ENCODE measurements at regions of chr12 and their contacts with region 1.

Region 1: DNA sequence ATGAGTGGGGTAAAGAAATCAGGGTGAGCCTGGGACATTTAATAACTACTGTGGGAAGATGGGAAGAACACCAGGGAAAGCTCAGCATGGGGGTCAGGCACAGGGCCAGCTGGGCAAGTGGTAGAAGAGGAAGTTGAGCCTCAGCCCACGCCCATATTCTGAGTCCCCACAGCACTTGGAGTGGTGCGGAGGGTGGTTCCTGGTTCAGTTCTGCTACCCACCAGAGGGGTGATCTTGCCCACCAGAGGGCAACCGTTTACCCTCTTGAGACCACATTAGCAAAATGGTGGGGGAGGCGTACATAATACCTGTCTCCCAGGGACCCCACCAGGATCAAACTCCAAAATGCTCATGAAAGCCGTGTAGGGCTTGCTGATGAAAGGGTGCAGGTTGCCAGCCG is 16.8 kb upstream of the ANKRD33 start:
- DNase-seq: no peak
- ATAC-seq: no peak
- H3K4me3 ChIP-seq: no peak overlapping the region
- H3K27ac ChIP-seq: no peak overlapping the region
- H3K4me1 ChIP-seq: peaks cover 2% of the 10 kb centered on the region; the same call in 1 of the 2 replicates
- H3K27me3 ChIP-seq: peaks cover 37% of the 10 kb centered on the region
- CTCF ChIP-seq: no peak
- POLR2A ChIP-seq: no peak
- RAD21 ChIP-seq: no peak

Region 2: DNA sequence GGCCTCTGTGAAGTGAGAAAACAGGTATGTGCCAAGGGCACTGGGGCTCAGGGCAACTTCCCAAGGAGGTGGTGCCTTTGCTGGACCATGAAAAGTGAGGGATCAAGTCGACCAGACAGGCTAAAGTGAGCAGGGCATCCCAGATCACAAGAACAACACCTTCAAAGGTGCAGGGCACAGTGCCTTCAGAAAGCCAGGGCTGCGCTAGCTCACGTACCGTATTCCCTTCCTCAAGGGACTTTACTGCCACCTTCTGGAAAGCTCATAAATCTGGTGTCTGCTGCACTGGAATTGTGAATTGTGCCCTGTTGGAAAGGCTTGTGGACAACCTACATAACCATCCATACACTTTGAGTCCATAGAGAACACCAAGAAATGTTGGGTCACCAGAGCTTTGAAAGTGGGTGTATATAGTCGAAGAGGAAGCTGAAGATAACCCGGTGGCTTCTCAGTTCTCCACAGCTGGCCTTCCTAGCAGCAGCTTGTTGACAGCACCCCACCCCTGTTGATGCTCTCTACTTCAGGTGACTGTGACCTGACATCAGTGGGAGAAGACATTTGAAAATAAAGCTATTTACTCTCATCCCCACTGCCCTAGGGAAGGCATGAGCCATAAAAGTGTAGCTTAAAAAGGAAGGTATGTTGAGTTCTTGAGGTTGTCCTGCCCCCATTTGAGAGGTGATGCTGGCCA is 47.1 kb before region 1 on chr12:
- CTCF ChIA-PET with region 1: interaction called, 12 read pairs
- POLR2A ChIA-PET with region 1: no interaction called
- dilution Hi-C with region 1: no loop called
- in situ Hi-C with region 1: no loop called
- intact Hi-C with region 1: no loop called
- DNase-seq: peak; percentile 73
- ATAC-seq: peak; percentile 33; the same call in 1 of the 2 replicates
- H3K4me3 ChIP-seq: no peak overlapping the region
- H3K27ac ChIP-seq: no peak overlapping the region
- H3K4me1 ChIP-seq: peaks cover 3% of the 10 kb centered on the region; the same call in 1 of the 2 replicates
- H3K27me3 ChIP-seq: no peaks in the 10 kb centered on the region; the same call in 1 of the 2 replicates
- CTCF ChIP-seq: peak; percentile 68
- POLR2A ChIP-seq: no peak
- RAD21 ChIP-seq: peak; percentile 83

Region 3: GRCh38 chr12:51886021-51886322 is 14.8 kb after region 1 on chr12:
- CTCF ChIA-PET with region 1: interaction called, 12 read pairs
- POLR2A ChIA-PET with region 1: no interaction called
- dilution Hi-C with region 1: no loop called
- in situ Hi-C with region 1: no loop called
- intact Hi-C with region 1: no loop called
- DNase-seq: peak; percentile 99
- ATAC-seq: peak; percentile 93
- H3K4me3 ChIP-seq: no peak overlapping the region
- H3K27ac ChIP-seq: peak overlapping the region; percentile 1; the same call in 1 of the 2 replicates
- H3K4me1 ChIP-seq: peaks cover 6% of the 10 kb centered on the region
- H3K27me3 ChIP-seq: no peaks in the 10 kb centered on the region
- CTCF ChIP-seq: no peak
- POLR2A ChIP-seq: no peak
- RAD21 ChIP-seq: no peak

Region 4: DNA sequence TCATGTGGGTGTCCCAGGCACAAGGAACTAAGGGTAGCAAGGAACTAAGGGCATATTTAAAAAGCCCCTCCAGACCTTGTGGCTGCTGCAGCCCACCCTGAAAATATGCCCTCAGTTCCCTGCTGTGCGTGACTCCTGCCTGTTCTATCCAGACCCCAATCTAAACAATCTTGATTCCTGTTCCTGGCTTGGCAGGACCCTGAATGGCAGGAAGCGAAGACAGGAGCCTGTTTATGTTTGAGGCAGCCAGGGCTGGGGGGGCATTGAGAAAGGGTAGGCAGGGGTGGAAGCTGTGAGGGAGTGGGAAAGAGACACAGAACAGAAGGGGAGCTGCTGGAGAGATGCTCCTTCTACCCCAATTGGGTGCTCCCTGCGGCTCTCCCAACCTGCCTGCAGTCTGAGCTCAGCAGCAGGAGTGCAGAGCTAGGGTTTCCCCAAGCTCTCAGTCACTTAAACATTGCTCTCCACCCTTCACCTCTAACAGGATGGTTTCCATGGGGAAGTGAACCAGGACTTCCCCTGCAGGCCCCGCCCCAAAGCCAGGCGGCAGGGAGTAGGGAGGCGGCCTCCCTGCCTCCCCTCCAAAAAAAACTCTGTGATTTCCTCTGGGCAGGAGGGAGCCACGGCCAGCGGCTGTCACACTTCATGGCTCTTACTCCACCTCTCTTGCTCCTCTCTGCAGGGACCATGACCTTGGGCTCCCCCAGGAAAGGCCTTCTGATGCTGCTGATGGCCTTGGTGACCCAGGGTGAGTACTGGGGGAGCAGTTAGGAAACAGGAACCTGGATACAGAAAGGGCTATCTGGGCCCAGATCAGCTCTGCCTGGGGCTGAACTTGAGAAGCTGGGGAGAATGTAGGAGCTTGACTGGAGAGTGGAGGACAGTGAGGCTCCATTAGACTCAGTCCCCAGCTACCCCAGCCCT is 40.9 kb after region 1 on chr12:
- CTCF ChIA-PET with region 1: no interaction called
- POLR2A ChIA-PET with region 1: no interaction called
- dilution Hi-C with region 1: no loop called
- in situ Hi-C with region 1: no loop called
- intact Hi-C with region 1: no loop called
- DNase-seq: peak; percentile 50
- ATAC-seq: peak; percentile 60
- H3K4me3 ChIP-seq: no peak overlapping the region
- H3K27ac ChIP-seq: peak overlapping the region; percentile 71
- H3K4me1 ChIP-seq: peaks cover 39% of the 10 kb centered on the region
- H3K27me3 ChIP-seq: no peaks in the 10 kb centered on the region
- CTCF ChIP-seq: no peak
- POLR2A ChIP-seq: no peak
- RAD21 ChIP-seq: no peak